ENCODE measurements at regions of chr16 and their contacts with region 1.

Region 1: GRCh38 chr16:10918294-10919002 is 23.8 kb downstream of the DEXI start:
- DNase-seq: peak; percentile 97
- ATAC-seq: peak; percentile 89
- H3K4me3 Mint-ChIP-seq: peak overlapping the region; percentile 18; the same call in 1 of the 2 replicates
- H3K27ac Mint-ChIP-seq: no peak overlapping the region
- H3K4me1 Mint-ChIP-seq: peaks cover 5% of the 10 kb centered on the region; the same call in 1 of the 2 replicates
- H3K27me3 Mint-ChIP-seq: no peaks in the 10 kb centered on the region
- CTCF ChIP-seq: peak; percentile 87

Region 2: GRCh38 chr16:10737068-10737625 is 181.3 kb before region 1 on chr16:
- CTCF ChIA-PET with region 1: interaction called, 16 read pairs
- POLR2A ChIA-PET with region 1: no interaction called
- DNase-seq: peak; percentile 59
- ATAC-seq: peak; percentile 64
- H3K4me3 Mint-ChIP-seq: no peak overlapping the region
- H3K27ac Mint-ChIP-seq: no peak overlapping the region
- H3K4me1 Mint-ChIP-seq: no peaks in the 10 kb centered on the region
- H3K27me3 Mint-ChIP-seq: no peaks in the 10 kb centered on the region
- CTCF ChIP-seq: peak; percentile 96

Region 3: DNA sequence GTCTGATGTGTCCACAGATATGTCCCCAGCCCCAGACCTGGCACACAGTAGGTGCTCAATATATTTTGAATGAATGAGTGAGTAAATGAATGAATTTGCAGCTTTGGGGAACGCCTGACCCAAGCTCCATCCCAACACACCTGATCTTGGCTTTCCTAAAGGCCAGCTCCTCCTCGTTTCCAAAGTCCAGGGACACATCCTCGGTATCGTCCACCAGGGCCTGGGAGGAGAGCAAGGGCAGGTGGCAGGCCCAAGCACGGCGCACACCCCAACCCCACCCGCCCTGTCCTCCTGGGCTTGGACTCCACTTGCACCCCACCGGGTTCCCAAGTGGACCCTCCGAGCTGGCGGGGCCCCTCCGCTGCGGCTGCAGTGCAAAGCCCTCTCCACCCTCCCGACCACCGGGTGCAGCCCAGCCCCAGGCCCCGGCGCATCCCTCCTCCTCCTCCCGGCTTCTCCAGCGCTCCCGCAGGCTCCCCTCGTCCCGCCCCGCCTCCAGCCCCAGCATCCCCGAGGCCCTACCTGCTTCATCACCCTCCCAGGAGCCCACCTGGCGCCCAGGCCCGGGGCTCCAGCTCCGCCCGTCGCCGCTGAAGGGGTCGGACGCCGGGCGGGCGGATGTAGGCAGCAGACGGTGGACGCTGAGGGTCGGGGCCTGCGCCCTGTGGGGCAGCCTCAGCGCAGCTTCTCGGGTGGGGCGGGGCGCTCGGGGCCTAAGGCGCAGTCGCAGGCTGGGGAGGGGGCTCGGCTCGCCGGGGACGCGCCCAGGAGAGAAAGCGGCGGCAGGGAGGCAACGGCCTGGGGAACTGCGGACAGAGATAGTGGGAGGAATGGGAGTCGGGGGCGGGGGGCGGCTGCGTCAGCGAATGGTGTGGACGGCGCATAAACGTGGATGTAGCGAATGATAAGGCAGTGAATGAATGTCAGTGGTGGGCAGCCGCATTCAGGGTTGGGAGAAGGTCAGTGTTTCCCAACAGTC is 100.2 kb before region 1 on chr16 and contains the start of gene TVP23A:
- CTCF ChIA-PET with region 1: interaction called, 17 read pairs
- POLR2A ChIA-PET with region 1: no interaction called
- DNase-seq: peak; percentile 65
- ATAC-seq: peak; percentile 85
- H3K4me3 Mint-ChIP-seq: peak within 1 kb of the TSS; percentile 69
- H3K27ac Mint-ChIP-seq: no peak within 1 kb of the TSS
- H3K4me1 Mint-ChIP-seq: peaks cover 9% of the 10 kb centered on the region
- H3K27me3 Mint-ChIP-seq: peaks cover 10% of the 10 kb centered on the region
- CTCF ChIP-seq: no peak
- total RNA-seq, gene TVP23A: 1.2 to 3.1 TPM (median 2.1 TPM) in 3 replicates

Region 4: DNA sequence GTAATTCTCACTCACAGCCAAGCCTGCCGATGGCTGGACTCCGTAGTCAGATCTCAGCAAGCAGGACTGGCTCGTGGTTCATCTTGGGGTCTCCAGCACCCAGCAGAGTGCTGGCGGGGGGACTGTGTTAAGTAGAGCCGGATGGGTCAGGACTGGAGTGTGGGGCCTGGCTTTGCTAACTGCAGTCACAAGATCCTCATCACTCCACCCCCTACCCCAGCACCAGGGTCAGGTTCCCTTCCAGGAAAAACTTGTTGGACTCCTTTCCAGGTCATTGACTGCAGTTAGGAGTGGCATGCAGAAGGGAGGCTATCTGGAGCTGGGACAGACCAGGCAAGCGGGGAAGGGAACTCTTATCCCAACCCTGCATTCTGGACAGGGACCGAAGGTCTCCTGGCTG is 35.4 kb before region 1 on chr16:
- CTCF ChIA-PET with region 1: interaction called, 45 read pairs
- POLR2A ChIA-PET with region 1: no interaction called
- DNase-seq: no peak
- ATAC-seq: peak; percentile 58
- H3K4me3 Mint-ChIP-seq: no peak overlapping the region
- H3K27ac Mint-ChIP-seq: no peak overlapping the region
- H3K4me1 Mint-ChIP-seq: peaks cover 20% of the 10 kb centered on the region
- H3K27me3 Mint-ChIP-seq: peaks cover 29% of the 10 kb centered on the region
- CTCF ChIP-seq: no peak

Region 5: DNA sequence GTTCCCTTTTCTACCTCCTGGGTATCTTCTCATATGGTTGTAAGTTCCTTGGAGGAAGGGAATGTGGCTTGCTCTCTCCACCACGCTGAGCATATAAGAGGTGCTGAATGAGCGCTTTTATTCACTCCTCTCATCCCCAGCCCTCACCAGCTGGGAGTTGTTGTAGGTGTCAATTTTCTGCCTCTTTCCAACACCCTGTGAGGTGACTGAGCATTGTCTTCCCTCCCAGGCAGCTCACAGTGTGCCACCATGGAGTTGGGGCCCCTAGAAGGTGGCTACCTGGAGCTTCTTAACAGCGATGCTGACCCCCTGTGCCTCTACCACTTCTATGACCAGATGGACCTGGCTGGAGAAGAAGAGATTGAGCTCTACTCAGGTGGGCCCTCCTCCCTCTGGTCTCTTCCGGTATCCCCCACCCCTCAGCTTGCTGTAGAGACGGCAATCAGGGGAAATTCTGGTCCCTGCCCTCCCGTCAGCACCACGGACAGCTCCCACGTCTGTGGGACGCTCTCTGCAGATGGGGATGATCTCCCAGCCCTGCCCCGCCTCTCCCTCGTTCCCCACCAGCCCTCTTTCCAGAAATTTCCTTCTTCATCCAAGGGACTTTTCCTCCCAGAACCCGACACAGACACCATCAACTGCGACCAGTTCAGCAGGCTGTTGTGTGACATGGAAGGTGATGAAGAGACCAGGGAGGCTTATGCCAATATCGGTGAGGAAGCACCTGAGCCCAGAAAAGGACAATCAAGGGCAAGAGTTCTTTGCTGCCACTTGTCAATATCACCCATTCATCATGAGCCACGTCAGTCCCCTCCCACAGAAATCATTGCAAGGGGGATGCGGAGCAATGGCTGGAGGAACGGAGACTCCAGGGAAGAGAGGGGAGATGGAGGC is 23.1 kb before region 1 on chr16:
- CTCF ChIA-PET with region 1: interaction called, 21 read pairs
- POLR2A ChIA-PET with region 1: no interaction called
- DNase-seq: peak; percentile 85
- ATAC-seq: peak; percentile 92
- H3K4me3 Mint-ChIP-seq: no peak overlapping the region
- H3K27ac Mint-ChIP-seq: no peak overlapping the region
- H3K4me1 Mint-ChIP-seq: peaks cover 8% of the 10 kb centered on the region
- H3K27me3 Mint-ChIP-seq: peaks cover 4% of the 10 kb centered on the region; the same call in 1 of the 2 replicates
- CTCF ChIP-seq: no peak

Region 6: DNA sequence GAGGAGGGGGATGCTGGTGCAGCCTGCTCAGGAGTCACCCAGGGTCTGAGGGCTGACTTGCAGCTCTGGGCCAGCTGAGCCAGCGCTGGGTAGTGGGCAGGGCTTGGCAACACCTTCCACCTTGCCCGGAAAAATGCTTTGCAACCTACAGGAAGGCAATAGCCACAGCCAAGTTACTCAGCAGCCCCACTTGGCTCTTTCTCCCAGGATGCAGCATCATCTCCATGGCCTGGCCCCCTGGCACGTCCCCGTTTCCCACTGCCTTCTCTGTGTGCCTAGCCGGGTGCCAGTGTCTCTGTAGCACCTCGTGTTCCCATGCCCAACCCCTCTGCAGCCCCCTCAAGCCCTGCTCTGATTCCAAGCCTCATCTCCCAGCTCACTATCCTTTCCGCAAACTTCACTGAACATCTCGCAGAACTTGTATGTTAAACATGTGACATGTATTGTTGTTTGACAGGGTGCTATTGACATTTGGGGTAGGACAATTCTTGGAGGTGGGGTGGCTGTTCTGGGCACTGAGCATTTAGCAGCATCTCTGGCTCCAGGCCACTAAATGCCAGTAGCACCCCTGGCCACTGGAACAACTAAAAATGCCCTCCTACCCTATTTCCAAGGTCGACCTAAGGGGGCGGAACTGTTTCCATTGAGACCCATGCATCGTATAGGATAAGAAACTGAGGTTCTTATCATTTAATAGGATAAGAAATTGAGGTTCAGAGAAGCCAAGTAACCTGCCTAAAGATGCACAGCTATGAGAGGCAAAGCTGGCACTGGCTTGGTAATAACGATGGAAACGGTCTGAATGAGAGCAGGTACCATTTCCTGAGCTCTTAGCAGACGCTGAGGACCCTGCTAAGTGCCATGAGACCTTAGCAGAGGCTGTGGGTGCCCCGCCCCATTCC is 11.7 kb after region 1 on chr16:
- CTCF ChIA-PET with region 1: interaction called, 12 read pairs
- POLR2A ChIA-PET with region 1: interaction called, 3 read pairs
- DNase-seq: no peak
- ATAC-seq: no peak
- H3K4me3 Mint-ChIP-seq: no peak overlapping the region
- H3K27ac Mint-ChIP-seq: no peak overlapping the region; the same call in 1 of the 2 replicates
- H3K4me1 Mint-ChIP-seq: no peaks in the 10 kb centered on the region
- H3K27me3 Mint-ChIP-seq: no peaks in the 10 kb centered on the region
- CTCF ChIP-seq: no peak

Region 7: GRCh38 chr16:10942233-10943063 is 24.0 kb after region 1 on chr16 and contains the start of gene DEXI:
- CTCF ChIA-PET with region 1: interaction called, 38 read pairs
- POLR2A ChIA-PET with region 1: interaction called, 3 read pairs
- DNase-seq: peak; percentile 93
- ATAC-seq: peak; percentile 69
- H3K4me3 Mint-ChIP-seq: peak within 1 kb of the TSS; percentile 95
- H3K27ac Mint-ChIP-seq: peak within 1 kb of the TSS; percentile 60
- H3K4me1 Mint-ChIP-seq: peaks cover 56% of the 10 kb centered on the region
- H3K27me3 Mint-ChIP-seq: peaks cover 3% of the 10 kb centered on the region; the same call in 1 of the 2 replicates
- CTCF ChIP-seq: peak; percentile 48; the same call in 1 of the 2 replicates
- total RNA-seq, gene DEXI: 33.7 to 42.1 TPM (median 37.7 TPM) in 3 replicates